Heart right ventricle (tissue), 16 donors: ENCODE measurements at regions of chr6 and their contacts with region 1.

Region 1: GRCh38 chr6:119147101-119148053 is 68.9 kb upstream of the FAM184A start:
- DNase-seq: peak in 1 of 2 donors; percentile 30
- ATAC-seq: peak in 7 of 8 donors; percentile 54 to 97 (median 70)
- H3K4me3 ChIP-seq: no peak overlapping the region
- H3K27ac ChIP-seq: peak overlapping the region in 3 of 10 donors; percentile 43 to 65 (median 52)
- H3K4me1 ChIP-seq: peaks cover 0 to 37% (median 13%) of the 10 kb centered on the region in 9 donors
- H3K27me3 ChIP-seq: no peaks in the 10 kb centered on the region
- CTCF ChIP-seq: no peak

Region 2: DNA sequence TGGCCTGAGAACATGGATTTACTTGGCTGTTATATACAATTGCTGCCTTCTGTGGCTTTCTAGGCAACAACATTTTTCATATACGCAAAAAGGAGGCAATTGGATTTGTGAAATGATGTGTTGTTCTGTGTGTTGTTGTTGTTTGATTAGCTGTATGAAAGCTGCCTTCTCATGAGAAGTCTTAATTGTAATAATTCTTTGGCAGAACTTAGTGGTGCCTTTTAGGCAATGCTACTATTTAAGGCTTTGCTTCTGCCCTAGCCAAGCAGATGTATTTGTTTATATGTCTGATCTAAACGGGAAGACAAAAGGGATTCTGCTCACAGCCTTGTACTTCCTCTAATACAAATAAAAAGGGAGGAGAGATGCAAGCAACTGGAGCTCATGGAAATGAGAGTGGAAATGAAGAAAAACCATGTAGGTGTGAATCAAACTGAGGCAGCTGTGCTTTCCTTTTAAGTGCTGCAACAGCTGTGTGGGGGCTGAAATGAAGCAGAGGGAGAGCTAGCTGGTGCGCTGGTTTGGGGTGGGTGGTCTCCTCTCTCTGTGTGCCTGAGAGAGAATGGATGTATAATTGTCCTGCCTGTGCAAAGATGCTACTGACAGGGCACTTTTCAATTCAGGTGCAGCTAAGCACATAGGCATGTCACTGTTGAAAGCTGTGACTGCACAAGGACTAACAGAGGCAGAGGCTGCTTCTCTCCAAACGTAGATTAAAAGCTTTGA is 589.1 kb after region 1 on chr6:
- intact Hi-C with region 1: loop called in 1 of 10 experiments (anchors 10 kb)
- DNase-seq: no peak
- ATAC-seq: no peak
- H3K4me3 ChIP-seq: no peak overlapping the region
- H3K27ac ChIP-seq: no peak overlapping the region
- H3K4me1 ChIP-seq: no peaks in the 10 kb centered on the region
- H3K27me3 ChIP-seq: no peaks in the 10 kb centered on the region
- CTCF ChIP-seq: no peak

Region 3: GRCh38 chr6:120077489-120077888 is 930.1 kb after region 1 on chr6:
- intact Hi-C with region 1: loop called in 1 of 10 experiments (anchors 10 kb)
- DNase-seq: no peak
- ATAC-seq: no peak
- H3K4me3 ChIP-seq: no peak overlapping the region
- H3K27ac ChIP-seq: no peak overlapping the region
- H3K4me1 ChIP-seq: no peaks in the 10 kb centered on the region
- H3K27me3 ChIP-seq: no peaks in the 10 kb centered on the region
- CTCF ChIP-seq: peak in 5 of 9 donors; percentile 7 to 39 (median 23)